Heart right ventricle (tissue), 16 donors: ENCODE measurements at regions of chr10 and their contacts with region 1.

Region 1: DNA sequence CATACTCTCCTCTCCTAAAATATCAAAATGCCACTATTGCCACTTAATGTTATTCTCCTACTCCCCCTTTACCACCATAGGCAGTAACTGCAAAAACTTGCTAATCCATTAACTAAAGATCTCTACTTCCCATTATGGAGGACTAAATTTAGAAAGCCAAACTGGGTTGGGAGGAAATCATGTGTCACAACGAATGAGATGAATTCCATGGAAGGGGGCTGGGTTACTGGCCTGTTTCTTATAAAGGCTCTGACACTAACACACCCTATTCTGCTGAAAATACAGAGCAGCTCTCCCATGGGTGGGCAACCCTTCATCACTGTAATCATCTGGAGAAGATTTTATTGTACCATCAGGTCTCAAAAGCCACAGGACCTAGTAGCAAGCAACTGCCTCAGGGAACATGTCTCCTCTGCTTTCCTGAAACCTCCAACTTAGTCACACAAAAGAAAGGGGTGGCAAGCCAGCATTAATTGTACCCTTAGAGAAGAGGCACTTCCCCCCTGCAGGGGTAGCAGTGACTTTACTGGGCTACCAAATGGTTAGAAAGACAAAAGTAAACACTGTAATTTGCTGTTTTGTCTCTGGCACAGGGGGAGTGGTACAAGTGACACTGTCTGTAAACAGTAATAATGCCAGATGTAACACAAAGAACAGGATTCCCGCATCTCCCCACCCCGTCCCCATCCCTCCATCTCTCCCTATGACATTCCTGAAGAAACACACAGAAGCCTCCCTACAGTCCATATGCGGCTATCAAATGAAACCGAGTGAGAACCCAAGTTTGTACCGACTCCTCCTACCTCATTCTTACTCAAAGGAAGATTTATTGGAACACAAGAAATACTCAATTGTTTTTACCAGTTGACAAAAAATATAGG is 81.6 kb downstream of the ARMH3 start:
- DNase-seq: peak in 1 of 2 donors; percentile 13
- ATAC-seq: peak; percentile 47 to 84 (median 70)
- H3K4me3 ChIP-seq: peak overlapping the region in 1 of 10 donors; percentile 27
- H3K27ac ChIP-seq: peak overlapping the region in 8 of 10 donors; percentile 26 to 81 (median 65)
- H3K4me1 ChIP-seq: peaks cover under 1 to 46% (median 26%) of the 10 kb centered on the region in 9 donors
- H3K27me3 ChIP-seq: no peaks in the 10 kb centered on the region
- CTCF ChIP-seq: no peak

Region 2: DNA sequence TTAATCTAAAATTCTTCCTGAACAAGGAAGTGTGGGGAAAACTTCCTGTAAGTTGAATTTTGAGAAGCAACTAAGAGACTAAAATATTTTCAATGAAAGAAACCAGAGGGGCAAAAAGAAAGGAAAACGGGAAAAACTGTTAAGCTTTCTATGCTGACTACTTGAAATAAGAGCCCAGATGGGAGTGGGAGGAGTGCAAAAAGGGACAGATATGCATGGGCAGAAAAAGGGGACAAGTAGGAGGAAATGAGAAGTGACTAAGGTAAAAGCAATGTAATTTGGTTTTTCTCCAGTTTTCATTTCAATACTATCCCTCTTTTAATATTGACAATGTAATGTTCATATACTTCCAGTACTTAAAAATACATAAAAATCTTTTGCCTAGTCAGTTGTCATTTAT is 167.2 kb before region 1 on chr10:
- intact Hi-C with region 1: no loop called
- DNase-seq: no peak
- ATAC-seq: no peak
- H3K4me3 ChIP-seq: no peak overlapping the region
- H3K27ac ChIP-seq: no peak overlapping the region
- H3K4me1 ChIP-seq: peaks cover 0 to 27% (median 9%) of the 10 kb centered on the region in 9 donors
- H3K27me3 ChIP-seq: no peaks in the 10 kb centered on the region
- CTCF ChIP-seq: no peak

Region 3: DNA sequence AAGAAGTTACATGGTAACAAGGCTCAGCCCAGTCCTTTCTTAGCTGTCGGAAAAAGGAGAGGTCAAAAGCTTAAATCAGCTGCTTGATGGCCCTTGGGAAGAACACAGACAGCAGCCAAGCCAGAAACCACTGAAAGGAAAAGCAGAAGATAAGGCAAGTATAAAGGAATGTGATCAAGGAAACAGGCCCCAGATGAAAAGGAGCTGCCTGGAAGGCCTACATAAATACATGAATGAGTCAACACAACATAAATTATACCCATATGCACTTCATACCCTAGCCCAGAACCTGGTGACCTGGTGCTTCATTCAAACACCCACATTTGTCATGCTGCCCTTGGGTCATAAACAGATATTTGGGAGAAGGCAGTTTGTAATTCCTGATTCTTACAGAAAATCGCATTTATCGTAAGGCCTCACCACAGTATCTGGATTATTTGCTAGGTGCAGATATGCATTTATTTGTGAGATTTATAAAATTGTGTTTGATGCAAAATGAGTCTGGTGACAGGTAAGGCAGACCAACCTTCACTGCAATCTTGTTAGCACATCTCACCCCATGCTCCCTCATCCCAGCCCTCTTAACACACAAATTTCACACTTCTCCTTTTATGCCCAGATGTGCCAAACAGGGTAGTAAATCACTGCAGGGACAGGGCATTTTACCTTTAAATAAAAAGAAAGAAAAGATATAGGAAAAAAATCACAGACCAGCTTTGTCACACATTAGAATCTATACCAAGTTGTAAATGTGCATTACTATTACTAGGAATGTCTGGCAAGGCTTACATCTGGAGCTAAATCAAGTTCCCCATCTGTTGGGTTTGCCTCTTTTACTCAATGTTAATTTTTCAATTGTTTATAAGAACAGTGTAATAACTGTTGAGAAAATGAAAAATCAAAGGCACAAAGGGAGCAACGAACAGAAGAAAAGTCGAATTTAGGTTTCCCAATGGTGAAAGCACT is 35.7 kb before region 1 on chr10:
- intact Hi-C with region 1: loop called in 1 of 10 experiments (anchors 5 kb)
- DNase-seq: no peak
- ATAC-seq: peak in 6 of 8 donors; percentile 27 to 50 (median 42)
- H3K4me3 ChIP-seq: peak overlapping the region in 8 of 10 donors; percentile 3 to 43 (median 36)
- H3K27ac ChIP-seq: peak overlapping the region; percentile 13 to 88 (median 84)
- H3K4me1 ChIP-seq: peaks cover 16 to 91% (median 61%) of the 10 kb centered on the region in 9 donors
- H3K27me3 ChIP-seq: no peaks in the 10 kb centered on the region
- CTCF ChIP-seq: no peak